CD14-positive monocyte (primary cell): ENCODE measurements at regions of chr1 and their contacts with region 1.

Region 1: DNA sequence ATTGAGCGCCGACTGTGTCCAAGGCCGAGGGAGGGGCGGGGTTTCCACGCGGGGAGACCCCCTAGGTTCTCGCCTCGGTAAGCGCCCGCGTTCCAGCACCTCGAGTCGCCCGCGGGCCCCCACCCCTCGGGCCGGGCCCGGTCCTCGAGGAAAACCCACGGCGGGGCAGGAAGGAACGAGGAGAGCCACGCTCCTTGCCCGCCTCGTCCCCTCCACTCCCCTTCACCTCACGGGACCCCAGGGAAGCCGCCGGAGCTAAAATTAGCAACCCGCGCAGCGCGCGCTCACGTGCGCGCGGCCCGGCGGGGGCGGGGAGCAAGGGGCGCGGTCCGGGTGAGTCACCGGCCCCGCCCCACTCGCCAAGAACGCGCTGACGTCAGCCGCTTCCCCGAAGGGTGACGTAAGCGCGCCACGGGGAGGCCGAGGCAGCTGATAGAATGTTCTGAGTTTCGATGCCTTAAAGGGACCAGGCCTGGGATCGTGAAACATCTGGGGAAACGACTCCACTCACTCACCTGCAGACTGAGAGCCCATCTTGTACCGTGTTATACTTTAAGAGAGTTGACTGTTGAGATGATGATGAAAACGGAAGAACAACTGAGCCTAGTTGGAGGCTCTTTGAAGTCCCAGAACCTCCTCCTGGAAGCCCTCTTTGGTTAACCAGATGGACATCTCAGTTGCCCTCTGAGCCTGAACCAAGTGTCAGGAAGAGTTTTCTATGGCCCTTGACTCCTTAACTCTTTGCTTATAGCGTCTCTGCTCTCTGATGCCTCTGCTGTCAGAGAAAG is 49.7 kb upstream of the ATF3 start:
- DNase-seq: peak; percentile 93 to 96 (median 96)
- H3K4me3 ChIP-seq: peak overlapping the region; percentile 49 to 79 (median 74)
- H3K4me3 Mint-ChIP-seq: peak overlapping the region; percentile 78 to 89
- H3K27ac ChIP-seq: peak overlapping the region; percentile 91 to 98
- H3K27ac Mint-ChIP-seq: peak overlapping the region; percentile 94 to 99 (median 97)
- H3K4me1 ChIP-seq: peaks cover 15 to 17% of the 10 kb centered on the region in 2 donors
- H3K4me1 Mint-ChIP-seq: peaks cover 15% of the 10 kb centered on the region
- H3K27me3 ChIP-seq: peaks cover 0 to 12% of the 10 kb centered on the region in 2 donors
- H3K27me3 Mint-ChIP-seq: peaks cover 3 to 14% (median 7%) of the 10 kb centered on the region in 3 donors
- CTCF ChIP-seq: no peak

Region 2: GRCh38 chr1:212488397-212489283 is 70.2 kb before region 1 on chr1:
- intact Hi-C with region 1: loop called (anchors 2 to 5 kb)
- DNase-seq: peak; percentile 96 to 100 (median 99)
- H3K4me3 ChIP-seq: no peak overlapping the region
- H3K4me3 Mint-ChIP-seq: no peak overlapping the region
- H3K27ac ChIP-seq: peak overlapping the region; percentile 85 to 89
- H3K27ac Mint-ChIP-seq: peak overlapping the region; percentile 93 to 100 (median 97)
- H3K4me1 ChIP-seq: peaks cover 57 to 60% of the 10 kb centered on the region in 2 donors
- H3K4me1 Mint-ChIP-seq: peaks cover 81% of the 10 kb centered on the region
- H3K27me3 ChIP-seq: no peaks in the 10 kb centered on the region
- H3K27me3 Mint-ChIP-seq: peaks cover 1 to 7% (median 4%) of the 10 kb centered on the region in 3 donors
- CTCF ChIP-seq: no peak

Region 3: DNA sequence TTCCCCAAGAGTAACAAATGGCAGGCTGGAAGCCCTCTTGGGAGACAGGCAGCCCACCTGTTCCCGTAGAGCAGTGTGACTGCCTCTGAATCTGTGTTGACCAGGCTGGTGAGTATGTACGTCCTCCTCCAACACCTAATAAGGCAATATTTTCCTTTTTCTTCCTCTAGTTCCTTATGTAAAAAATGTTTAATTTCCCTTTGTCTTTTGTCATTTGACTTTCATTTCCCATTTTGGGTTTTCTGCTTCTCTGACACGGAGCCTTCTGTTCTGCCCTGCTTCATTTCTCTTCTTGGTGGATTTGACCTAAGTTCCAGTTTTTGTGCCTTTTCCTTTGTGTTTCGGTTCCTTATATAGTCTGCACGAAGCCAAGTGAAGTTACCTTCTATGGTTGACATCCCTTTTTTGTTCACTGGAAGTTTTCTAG is 16.1 kb before region 1 on chr1:
- intact Hi-C with region 1: loop called in 1 of 2 experiments (anchors 2 kb)
- DNase-seq: peak; percentile 88 to 96 (median 95)
- H3K4me3 ChIP-seq: peak overlapping the region in 1 of 3 experiments; percentile 51
- H3K4me3 Mint-ChIP-seq: peak overlapping the region in 1 of 2 donors; percentile 67
- H3K27ac ChIP-seq: peak overlapping the region; percentile 87 to 94
- H3K27ac Mint-ChIP-seq: peak overlapping the region; percentile 95 to 98 (median 97)
- H3K4me1 ChIP-seq: peaks cover 43 to 48% of the 10 kb centered on the region in 2 donors
- H3K4me1 Mint-ChIP-seq: peaks cover 44% of the 10 kb centered on the region
- H3K27me3 ChIP-seq: no peaks in the 10 kb centered on the region
- H3K27me3 Mint-ChIP-seq: no peaks in the 10 kb centered on the region
- CTCF ChIP-seq: no peak

Region 4: GRCh38 chr1:212595787-212596714 is 37.2 kb after region 1 on chr1:
- intact Hi-C with region 1: no loop called
- DNase-seq: peak; percentile 72 to 89 (median 82)
- H3K4me3 ChIP-seq: peak overlapping the region in 1 of 3 experiments; percentile 31
- H3K4me3 Mint-ChIP-seq: peak overlapping the region; percentile 4 to 59
- H3K27ac ChIP-seq: peak overlapping the region in 1 of 2 donors; percentile 21
- H3K27ac Mint-ChIP-seq: peak overlapping the region; percentile 51 to 81 (median 72)
- H3K4me1 ChIP-seq: peaks cover 0 to 16% of the 10 kb centered on the region in 2 donors
- H3K4me1 Mint-ChIP-seq: peaks cover 17% of the 10 kb centered on the region
- H3K27me3 ChIP-seq: peaks cover 12 to 13% of the 10 kb centered on the region in 2 donors
- H3K27me3 Mint-ChIP-seq: peaks cover 18 to 21% (median 20%) of the 10 kb centered on the region in 3 donors
- CTCF ChIP-seq: peak; percentile 75